ENCODE measurements at regions of chr3 and their contacts with region 1.

Region 1: GRCh38 chr3:68876112-68876713 is 56.1 kb downstream of the TAFA4 start:
- DNase-seq: peak; percentile 42
- H3K4me3 Mint-ChIP-seq: no peak overlapping the region
- H3K27ac Mint-ChIP-seq: no peak overlapping the region
- H3K4me1 Mint-ChIP-seq: no peaks in the 10 kb centered on the region
- H3K27me3 Mint-ChIP-seq: peaks cover 54% of the 10 kb centered on the region
- CTCF ChIP-seq: peak; percentile 58

Region 2: GRCh38 chr3:66938338-66938963 is 1937.8 kb before region 1 on chr3:
- CTCF ChIA-PET with region 1: interaction called, 5 read pairs
- intact Hi-C with region 1: loop called (anchors 5 kb)
- DNase-seq: peak; percentile 40
- H3K4me3 Mint-ChIP-seq: no peak overlapping the region
- H3K27ac Mint-ChIP-seq: no peak overlapping the region
- H3K4me1 Mint-ChIP-seq: no peaks in the 10 kb centered on the region
- H3K27me3 Mint-ChIP-seq: no peaks in the 10 kb centered on the region
- CTCF ChIP-seq: peak; percentile 65

Region 3: DNA sequence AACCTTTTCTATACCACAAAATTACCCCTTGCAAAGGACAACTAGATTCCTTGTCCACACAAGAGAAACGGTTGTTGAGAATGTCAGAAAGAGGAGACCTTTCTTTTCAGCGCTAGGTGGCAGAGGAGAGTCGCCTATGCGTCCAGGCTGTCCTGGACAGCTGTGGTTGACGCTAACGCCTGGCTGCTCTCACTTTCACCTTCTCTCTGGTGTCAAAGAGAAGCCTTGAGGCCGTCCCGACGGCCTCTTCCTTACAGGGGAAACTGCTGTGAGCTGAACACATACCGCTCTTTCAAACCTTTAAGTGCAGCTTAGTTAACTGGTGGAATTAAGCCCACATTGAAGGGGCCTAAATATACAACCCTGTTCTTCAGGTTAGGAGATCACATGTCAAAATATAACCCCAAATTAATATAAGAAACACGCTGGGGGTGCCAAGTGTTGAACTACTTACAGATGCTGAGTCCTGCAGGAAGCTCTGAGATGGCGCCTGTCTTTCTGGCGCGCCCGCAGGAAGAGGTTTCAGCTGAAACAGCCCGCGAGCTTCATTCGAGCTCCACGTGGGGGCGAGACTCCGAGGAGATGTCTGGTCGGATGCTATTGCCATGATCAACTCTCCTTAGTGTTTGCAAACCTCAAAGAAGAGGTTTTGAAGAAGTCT is 1904.2 kb before region 1 on chr3:
- CTCF ChIA-PET with region 1: no interaction called
- intact Hi-C with region 1: loop called (anchors 1 kb)
- DNase-seq: peak; percentile 71
- H3K4me3 Mint-ChIP-seq: peak overlapping the region; percentile 60
- H3K27ac Mint-ChIP-seq: no peak overlapping the region
- H3K4me1 Mint-ChIP-seq: no peaks in the 10 kb centered on the region
- H3K27me3 Mint-ChIP-seq: peaks cover 17% of the 10 kb centered on the region
- CTCF ChIP-seq: peak; percentile 47

Region 4: GRCh38 chr3:67384760-67385397 is 1491.3 kb before region 1 on chr3:
- CTCF ChIA-PET with region 1: interaction called, 5 read pairs
- intact Hi-C with region 1: loop called (anchors 1 kb)
- DNase-seq: peak; percentile 18
- H3K4me3 Mint-ChIP-seq: no peak overlapping the region
- H3K27ac Mint-ChIP-seq: no peak overlapping the region
- H3K4me1 Mint-ChIP-seq: no peaks in the 10 kb centered on the region
- H3K27me3 Mint-ChIP-seq: no peaks in the 10 kb centered on the region
- CTCF ChIP-seq: no peak

Region 5: GRCh38 chr3:67819447-67819846 is 1056.8 kb before region 1 on chr3:
- CTCF ChIA-PET with region 1: no interaction called
- intact Hi-C with region 1: loop called (anchors 1 kb)
- DNase-seq: peak; percentile 3
- H3K4me3 Mint-ChIP-seq: no peak overlapping the region
- H3K27ac Mint-ChIP-seq: no peak overlapping the region
- H3K4me1 Mint-ChIP-seq: no peaks in the 10 kb centered on the region
- H3K27me3 Mint-ChIP-seq: no peaks in the 10 kb centered on the region
- CTCF ChIP-seq: no peak

Region 6: DNA sequence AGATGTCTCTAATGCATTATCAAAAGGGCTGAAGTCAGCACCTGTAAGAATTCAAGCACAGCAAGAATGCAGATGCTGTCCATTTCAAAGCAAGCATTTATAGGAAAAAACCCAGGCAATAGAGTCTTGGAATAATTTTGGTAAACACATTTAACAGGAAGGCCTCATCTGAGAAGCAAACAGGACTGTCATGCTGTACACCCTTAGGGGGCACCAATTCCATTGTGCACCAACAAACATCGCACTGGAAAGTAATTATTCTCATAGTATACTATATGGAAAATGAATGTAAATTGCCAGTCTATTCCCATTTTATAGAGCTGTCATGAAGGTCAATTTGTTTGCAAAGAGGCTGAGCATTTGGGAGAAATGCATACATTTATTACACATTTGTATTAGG is 974.5 kb before region 1 on chr3:
- CTCF ChIA-PET with region 1: no interaction called
- intact Hi-C with region 1: loop called (anchors 5 kb)
- DNase-seq: no peak
- H3K4me3 Mint-ChIP-seq: no peak overlapping the region
- H3K27ac Mint-ChIP-seq: no peak overlapping the region
- H3K4me1 Mint-ChIP-seq: no peaks in the 10 kb centered on the region
- H3K27me3 Mint-ChIP-seq: no peaks in the 10 kb centered on the region
- CTCF ChIP-seq: no peak

Region 7: GRCh38 chr3:68639766-68640165 is 236.4 kb before region 1 on chr3:
- CTCF ChIA-PET with region 1: no interaction called
- intact Hi-C with region 1: no loop called
- DNase-seq: no peak
- H3K4me3 Mint-ChIP-seq: no peak overlapping the region
- H3K27ac Mint-ChIP-seq: no peak overlapping the region
- H3K4me1 Mint-ChIP-seq: no peaks in the 10 kb centered on the region
- H3K27me3 Mint-ChIP-seq: no peaks in the 10 kb centered on the region
- CTCF ChIP-seq: no peak

Region 8: GRCh38 chr3:68972358-68972979 is 96.3 kb after region 1 on chr3:
- CTCF ChIA-PET with region 1: no interaction called
- intact Hi-C with region 1: loop called (anchors 5 kb)
- DNase-seq: peak; percentile 67
- H3K4me3 Mint-ChIP-seq: no peak overlapping the region
- H3K27ac Mint-ChIP-seq: no peak overlapping the region
- H3K4me1 Mint-ChIP-seq: no peaks in the 10 kb centered on the region
- H3K27me3 Mint-ChIP-seq: peaks cover 46% of the 10 kb centered on the region
- CTCF ChIP-seq: peak; percentile 66